Gastrocnemius medialis (tissue), 4 donors: ENCODE measurements at regions of chr2 and their contacts with region 1.

Region 1: DNA sequence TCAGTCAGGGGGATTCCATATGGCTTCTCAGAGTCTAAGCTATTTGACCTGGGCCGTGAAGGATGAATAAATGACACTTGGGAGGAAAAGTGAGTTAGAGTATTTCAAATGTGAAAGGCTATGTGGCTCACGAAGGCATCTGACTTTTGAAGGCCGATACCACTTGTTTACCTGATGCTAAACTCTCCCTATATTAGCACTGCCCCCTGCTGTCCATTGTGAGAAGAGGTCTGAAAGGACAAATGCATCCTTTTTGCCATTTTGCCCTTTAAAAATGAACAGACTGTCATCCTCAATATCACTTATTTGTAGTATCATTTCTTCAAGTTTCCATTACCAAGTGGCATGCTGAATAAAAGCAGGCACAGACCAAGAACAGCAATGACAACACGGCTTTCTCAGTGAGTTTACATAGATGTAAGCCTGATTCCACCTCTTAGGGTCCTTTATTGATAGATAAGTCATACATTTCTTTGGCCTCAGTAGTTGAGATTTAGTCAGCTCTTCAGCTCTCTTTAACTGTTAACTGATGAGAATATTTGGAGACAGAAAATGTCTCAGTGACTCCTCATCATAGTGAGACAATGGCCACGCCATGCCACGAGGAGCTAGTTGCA is 40.1 kb downstream of the DOCK10 start:
- DNase-seq: peak; percentile 17 to 29
- ATAC-seq: peak; percentile 78 to 79
- H3K4me3 ChIP-seq: no peak overlapping the region
- H3K27ac ChIP-seq: no peak overlapping the region
- H3K4me1 ChIP-seq: peaks cover 0 to 4% of the 10 kb centered on the region in 2 donors
- H3K27me3 ChIP-seq: no peaks in the 10 kb centered on the region
- CTCF ChIP-seq: peak; percentile 27 to 67 (median 61)
- POLR2A ChIP-seq: no peak

Region 2: GRCh38 chr2:224778474-224778877 is 223.7 kb before region 1 on chr2:
- in situ Hi-C with region 1: no loop called
- intact Hi-C with region 1: loop called (anchors 10 kb)
- DNase-seq: peak in 1 of 2 donors; percentile 37
- ATAC-seq: no peak
- H3K4me3 ChIP-seq: no peak overlapping the region
- H3K27ac ChIP-seq: no peak overlapping the region
- H3K4me1 ChIP-seq: peaks cover 0 to 3% of the 10 kb centered on the region in 2 donors
- H3K27me3 ChIP-seq: no peaks in the 10 kb centered on the region
- CTCF ChIP-seq: peak; percentile 31 to 78 (median 65)
- POLR2A ChIP-seq: no peak

Region 3: GRCh38 chr2:224930990-224931389 is 71.2 kb before region 1 on chr2:
- in situ Hi-C with region 1: no loop called
- intact Hi-C with region 1: loop called (anchors 5 kb)
- DNase-seq: no peak
- ATAC-seq: no peak
- H3K4me3 ChIP-seq: no peak overlapping the region
- H3K27ac ChIP-seq: no peak overlapping the region
- H3K4me1 ChIP-seq: peaks cover 9 to 21% of the 10 kb centered on the region in 2 donors
- H3K27me3 ChIP-seq: no peaks in the 10 kb centered on the region
- CTCF ChIP-seq: peak in 1 of 5 experiments; percentile 14
- POLR2A ChIP-seq: no peak

Region 4: DNA sequence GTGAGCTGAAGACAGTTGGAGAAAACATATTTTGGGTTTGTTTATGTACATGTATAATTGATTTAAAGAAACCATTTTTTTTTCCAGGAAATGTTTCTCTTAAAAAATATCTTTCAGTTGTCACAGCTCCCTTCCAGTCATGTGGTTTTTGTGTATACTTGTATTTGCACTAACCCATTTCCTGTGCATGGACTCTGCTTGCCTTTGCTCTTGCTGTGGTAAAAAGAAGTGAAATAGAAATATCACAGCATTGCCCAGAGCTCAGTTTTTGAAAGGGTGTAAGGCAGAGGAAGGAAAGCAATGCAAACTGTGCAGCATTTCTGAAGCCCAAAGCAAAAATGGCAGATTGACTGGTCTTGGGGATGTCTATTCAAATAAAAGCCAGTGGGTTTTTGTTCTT is 50.6 kb after region 1 on chr2:
- in situ Hi-C with region 1: no loop called
- intact Hi-C with region 1: no loop called
- DNase-seq: no peak
- ATAC-seq: no peak
- H3K4me3 ChIP-seq: no peak overlapping the region
- H3K27ac ChIP-seq: no peak overlapping the region
- H3K4me1 ChIP-seq: no peaks in the 10 kb centered on the region
- H3K27me3 ChIP-seq: no peaks in the 10 kb centered on the region
- CTCF ChIP-seq: no peak
- POLR2A ChIP-seq: no peak